A673 (cell line): ENCODE measurements at regions of chr5 and their contacts with region 1.

Region 1: DNA sequence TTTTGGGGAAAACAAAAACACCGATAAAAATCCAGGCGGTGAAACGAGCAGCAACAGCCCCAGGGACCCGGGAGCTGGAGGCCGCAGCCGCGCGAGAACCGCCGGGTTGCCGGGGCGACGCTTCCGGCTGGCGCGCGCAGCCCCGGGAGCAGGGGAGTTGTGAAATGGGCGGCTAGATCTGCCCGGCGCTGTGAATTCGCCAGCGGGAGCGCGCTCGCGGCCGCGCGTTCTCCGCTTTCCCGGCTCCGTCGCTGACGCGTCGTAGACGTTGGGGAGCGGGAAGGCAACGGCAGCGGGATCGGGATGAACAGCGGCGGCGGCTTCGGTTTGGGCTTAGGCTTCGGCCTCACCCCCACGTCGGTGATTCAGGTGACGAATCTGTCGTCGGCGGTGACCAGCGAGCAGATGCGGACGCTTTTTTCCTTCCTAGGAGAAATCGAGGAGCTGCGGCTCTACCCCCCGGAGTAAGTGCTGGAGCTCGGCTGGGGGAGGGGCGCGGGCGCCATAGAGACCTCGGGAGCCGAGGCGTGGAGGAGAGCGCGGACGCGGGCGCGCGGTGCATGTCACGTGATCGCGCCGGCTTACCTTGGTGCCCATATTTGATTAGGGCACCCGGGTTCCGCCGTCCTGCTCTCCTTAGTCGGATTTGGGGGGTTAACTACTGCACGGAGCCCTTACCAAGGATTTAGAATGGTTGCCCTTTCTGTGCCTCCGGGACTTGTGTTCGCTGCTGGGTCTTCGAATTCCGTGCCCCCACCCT is at the start of gene SREK1:
- DNase-seq: peak; percentile 96
- H3K4me3 ChIP-seq: peak within 1 kb of the TSS; percentile 94
- H3K27ac ChIP-seq: peak within 1 kb of the TSS; percentile 98
- H3K4me1 ChIP-seq: peaks cover 11% of the 10 kb centered on the region
- H3K27me3 ChIP-seq: no peaks in the 10 kb centered on the region
- CTCF ChIP-seq: no peak
- total RNA-seq, gene SREK1: 82.4 and 95.9 TPM in 2 replicates

Region 2: DNA sequence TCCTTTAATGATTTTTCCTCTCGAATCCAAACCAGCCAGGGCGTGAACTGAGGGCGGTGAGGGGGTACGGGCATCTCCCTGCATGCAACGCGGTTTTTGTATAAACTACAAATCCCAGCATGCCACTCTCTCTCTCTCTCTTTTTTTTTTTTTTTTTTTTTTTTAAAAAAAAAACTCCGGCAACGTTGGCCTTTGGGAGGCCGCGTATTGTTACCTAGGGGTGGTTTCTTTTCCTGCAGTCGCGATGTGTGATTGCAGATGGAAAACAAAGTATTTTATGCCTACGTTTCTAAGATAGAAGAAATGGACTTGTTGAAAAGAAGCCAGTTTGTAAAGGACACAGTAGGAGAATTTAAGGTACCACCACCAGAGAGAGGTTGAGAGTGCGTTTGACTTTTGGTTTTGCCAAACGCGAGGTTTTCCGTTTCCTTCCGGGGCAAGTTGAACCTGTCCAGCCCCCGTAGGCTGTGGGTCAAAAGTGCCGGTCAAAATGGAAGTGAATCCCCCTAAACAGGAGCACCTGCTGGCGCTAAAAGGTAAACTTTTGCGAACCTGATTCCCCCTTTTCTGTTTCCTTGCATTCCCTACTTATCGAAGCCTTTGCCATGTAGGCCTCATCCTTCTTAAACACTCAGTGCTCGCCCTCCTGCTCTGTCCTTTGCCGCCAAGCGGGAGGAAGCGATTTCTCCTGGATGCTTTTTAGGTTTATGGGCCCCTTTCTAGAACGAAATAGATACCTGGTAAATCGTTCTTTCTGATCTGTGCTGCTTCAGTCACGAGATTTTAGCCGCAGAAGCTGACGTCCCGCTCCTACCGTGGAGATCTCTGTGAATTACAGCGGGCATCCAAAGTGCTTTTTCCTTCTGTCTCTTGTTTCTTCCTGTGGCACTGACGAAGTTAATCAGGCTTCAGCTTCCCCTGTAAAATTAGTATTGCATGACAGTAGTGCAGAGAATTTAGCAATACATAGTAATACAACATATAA is 519.4 kb before region 1 on chr5 and contains the starts of genes SHLD3 and TRAPPC13:
- CTCF ChIA-PET with region 1: no interaction called
- POLR2A ChIA-PET with region 1: no interaction called
- intact Hi-C with region 1: loop called (anchors 10 kb)
- DNase-seq: peak; percentile 93
- H3K4me3 ChIP-seq: peak within 1 kb of the TSS; percentile 82
- H3K27ac ChIP-seq: peak within 1 kb of the TSS; percentile 89
- H3K4me1 ChIP-seq: peaks cover 12% of the 10 kb centered on the region
- H3K27me3 ChIP-seq: no peaks in the 10 kb centered on the region
- CTCF ChIP-seq: no peak
- total RNA-seq, gene SHLD3: 3.7 and 4.5 TPM in 2 replicates
- total RNA-seq, gene TRAPPC13: 29.6 and 33.0 TPM in 2 replicates

Region 3: DNA sequence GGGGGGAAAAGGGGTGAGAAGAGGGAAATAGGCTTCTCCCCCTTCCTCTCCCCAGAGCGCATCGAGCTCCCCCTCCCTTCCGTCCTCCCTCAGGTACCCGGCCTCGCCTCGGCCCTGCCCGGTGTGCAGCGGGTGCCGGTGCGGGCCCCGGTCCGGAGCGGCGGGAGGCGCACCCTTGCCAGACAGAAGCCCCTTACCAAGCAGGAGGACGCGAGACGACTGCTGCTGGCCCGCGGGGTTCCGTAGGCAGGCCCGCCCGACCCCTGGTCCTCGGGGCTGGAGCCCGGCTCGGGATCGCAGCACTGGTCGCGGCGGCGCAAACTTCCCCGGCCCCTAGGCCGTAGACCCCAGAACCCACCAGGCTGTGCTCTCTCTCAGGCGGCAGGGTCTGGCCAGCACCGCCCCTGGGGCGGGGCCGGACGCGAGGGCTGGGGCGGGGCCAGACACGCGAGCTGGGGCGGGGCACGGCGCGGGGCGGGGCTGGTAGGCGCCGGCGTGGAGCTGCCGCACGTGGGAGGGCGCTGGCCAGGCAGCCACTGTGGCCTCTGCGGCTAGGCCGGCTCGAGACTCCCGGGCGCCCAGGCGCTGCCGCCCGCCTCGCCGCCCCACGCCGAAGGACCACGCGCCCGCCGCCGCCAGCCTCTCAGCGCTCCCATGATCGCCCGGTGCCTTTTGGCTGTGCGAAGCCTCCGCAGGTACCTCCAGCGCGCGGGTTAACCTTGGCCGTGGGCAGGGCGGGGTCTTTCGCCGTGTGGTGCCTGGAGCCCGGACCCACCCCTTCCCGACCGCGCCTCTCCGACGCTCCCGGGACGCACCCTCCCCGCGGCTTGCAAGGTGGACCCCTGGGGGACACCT is 422.3 kb before region 1 on chr5 and contains the starts of genes NLN and SGTB:
- CTCF ChIA-PET with region 1: no interaction called
- POLR2A ChIA-PET with region 1: no interaction called
- intact Hi-C with region 1: loop called (anchors 10 kb)
- DNase-seq: peak; percentile 85
- H3K4me3 ChIP-seq: peak within 1 kb of the TSS; percentile 77
- H3K27ac ChIP-seq: peak within 1 kb of the TSS; percentile 85
- H3K4me1 ChIP-seq: peaks cover 16% of the 10 kb centered on the region
- H3K27me3 ChIP-seq: no peaks in the 10 kb centered on the region
- CTCF ChIP-seq: no peak
- total RNA-seq, gene NLN: 95.2 and 99.9 TPM in 2 replicates
- total RNA-seq, gene SGTB: 19.1 and 19.8 TPM in 2 replicates

Region 4: DNA sequence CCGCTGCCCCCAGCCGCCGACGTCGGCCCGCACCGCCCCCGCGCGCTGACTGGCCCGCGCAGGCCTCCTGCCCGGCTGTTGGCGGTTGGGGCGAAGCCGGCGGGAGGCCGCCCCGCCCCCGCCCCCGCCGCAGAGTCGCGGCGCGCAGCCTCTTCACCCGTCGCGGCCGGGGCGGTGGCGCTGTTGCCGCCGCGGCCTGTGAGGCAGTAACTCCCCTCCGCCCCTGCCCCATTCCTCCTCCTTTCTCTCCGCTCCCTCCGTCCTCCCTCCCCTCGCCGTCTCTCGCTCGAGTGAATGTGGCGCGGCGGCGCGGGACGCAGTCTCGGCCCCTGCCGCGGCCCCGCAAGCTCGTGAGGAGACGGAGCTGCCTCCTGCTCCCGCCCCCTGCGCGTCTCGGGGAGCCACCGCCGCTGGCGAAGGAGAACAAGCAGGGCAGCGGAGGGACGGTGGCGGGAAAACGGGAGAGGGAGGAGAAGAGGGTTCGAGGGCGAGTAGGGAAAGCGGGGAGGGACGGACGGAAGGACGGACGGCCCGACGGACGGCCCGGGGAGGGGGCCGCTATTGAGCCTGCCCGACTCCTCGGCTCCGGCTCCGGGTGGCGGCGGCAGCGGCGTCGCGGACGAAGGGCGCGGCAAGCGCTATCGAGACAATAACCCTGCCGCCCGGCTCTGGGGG is 218.5 kb before region 1 on chr5:
- CTCF ChIA-PET with region 1: no interaction called
- POLR2A ChIA-PET with region 1: no interaction called
- intact Hi-C with region 1: loop called (anchors 5 kb)
- DNase-seq: peak; percentile 94
- H3K4me3 ChIP-seq: peak overlapping the region; percentile 73
- H3K27ac ChIP-seq: peak overlapping the region; percentile 96
- H3K4me1 ChIP-seq: peaks cover 7% of the 10 kb centered on the region
- H3K27me3 ChIP-seq: no peaks in the 10 kb centered on the region
- CTCF ChIP-seq: peak; percentile 43

Region 5: GRCh38 chr5:66312291-66312690 is 168.0 kb after region 1 on chr5:
- CTCF ChIA-PET with region 1: no interaction called
- POLR2A ChIA-PET with region 1: no interaction called
- intact Hi-C with region 1: no loop called
- DNase-seq: no peak
- H3K4me3 ChIP-seq: no peak overlapping the region
- H3K27ac ChIP-seq: no peak overlapping the region
- H3K4me1 ChIP-seq: no peaks in the 10 kb centered on the region
- H3K27me3 ChIP-seq: peaks cover 4% of the 10 kb centered on the region
- CTCF ChIP-seq: no peak